PC-9 (cell line): ENCODE measurements at regions of chr4 and their contacts with region 1.

Region 1: GRCh38 chr4:3074078-3074795 is at the starts of genes HTT and HTT-AS:
- DNase-seq: peak; percentile 80 to 94
- H3K4me3 ChIP-seq: peak within 1 kb of the TSS; percentile 87
- H3K27ac ChIP-seq: peak within 1 kb of the TSS; percentile 63
- H3K4me1 ChIP-seq: peaks cover 9% of the 10 kb centered on the region
- H3K27me3 ChIP-seq: no peaks in the 10 kb centered on the region
- CTCF ChIP-seq: no peak
- total RNA-seq, gene HTT: 69.0 and 81.7 TPM in 2 replicates
- total RNA-seq, gene HTT-AS: not detected in 2 replicates

Region 2: DNA sequence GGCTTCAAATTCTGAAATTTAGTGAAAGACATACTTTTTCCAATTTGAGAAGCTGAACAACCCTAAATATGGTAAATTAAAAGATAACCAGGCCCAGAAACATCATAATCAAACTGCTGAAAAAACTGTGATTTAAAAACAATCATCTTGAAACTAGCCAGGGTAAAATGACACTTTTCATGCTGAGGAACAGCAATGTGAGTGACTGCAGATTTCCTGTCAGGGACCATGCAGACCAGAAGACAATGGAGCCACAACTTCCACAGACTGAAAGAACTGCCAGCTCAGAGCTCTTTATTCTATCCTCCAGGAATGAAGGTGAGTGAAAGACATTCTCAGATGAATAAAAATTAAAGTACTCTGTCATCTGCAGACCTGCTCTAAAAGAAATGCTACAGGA is 941.8 kb before region 1 on chr4:
- CTCF ChIA-PET with region 1: no interaction called
- POLR2A ChIA-PET with region 1: no interaction called
- intact Hi-C with region 1: no loop called
- DNase-seq: no peak
- H3K4me3 ChIP-seq: no peak overlapping the region
- H3K27ac ChIP-seq: no peak overlapping the region
- H3K4me1 ChIP-seq: peaks cover 12% of the 10 kb centered on the region
- H3K27me3 ChIP-seq: 0 out of 2 replicates have a peak, but pooled peaks cover 2% of the 10 kb centered on the region
- CTCF ChIP-seq: no peak

Region 3: GRCh38 chr4:2767046-2767704 is 307.1 kb before region 1 on chr4:
- CTCF ChIA-PET with region 1: no interaction called
- POLR2A ChIA-PET with region 1: interaction called, 16 read pairs
- intact Hi-C with region 1: no loop called
- DNase-seq: no peak
- H3K4me3 ChIP-seq: no peak overlapping the region
- H3K27ac ChIP-seq: no peak overlapping the region
- H3K4me1 ChIP-seq: no peaks in the 10 kb centered on the region
- H3K27me3 ChIP-seq: no peaks in the 10 kb centered on the region
- CTCF ChIP-seq: no peak

Region 4: DNA sequence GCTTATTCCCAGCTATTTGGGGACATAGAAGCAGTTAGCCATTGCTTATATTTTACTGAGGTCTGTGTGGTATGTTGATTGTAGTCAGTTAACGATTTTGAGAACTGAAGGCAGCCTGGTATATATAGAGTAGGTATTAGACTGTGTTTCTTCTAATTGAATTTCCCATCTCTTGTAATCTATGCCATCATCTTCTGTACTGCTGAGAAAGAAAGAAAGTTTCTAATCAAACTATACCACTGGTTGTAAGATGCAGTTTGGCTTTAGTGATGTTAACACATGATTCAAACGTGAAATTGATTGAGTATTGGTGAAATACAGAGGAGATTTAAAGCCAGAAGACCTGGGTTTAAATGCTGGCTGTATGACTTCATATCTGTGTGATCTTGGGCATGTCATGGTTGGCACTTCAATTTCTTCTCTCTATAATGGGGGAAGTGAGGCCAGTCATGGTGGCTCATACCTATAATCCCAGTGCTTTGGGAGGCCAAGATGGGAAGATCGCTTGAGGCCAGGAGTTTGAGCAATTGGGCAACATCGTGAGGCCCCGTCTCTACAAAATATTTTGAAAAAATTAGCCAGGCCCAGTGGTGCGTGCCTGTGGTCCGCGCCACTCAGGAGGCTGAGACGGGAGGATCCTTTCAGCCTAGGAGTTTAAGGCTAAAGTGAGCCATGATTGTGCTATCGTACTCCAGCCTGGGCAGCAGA is 11.9 kb after region 1 on chr4:
- CTCF ChIA-PET with region 1: no interaction called
- POLR2A ChIA-PET with region 1: no interaction called
- intact Hi-C with region 1: loop called (anchors 1 kb)
- DNase-seq: no peak
- H3K4me3 ChIP-seq: no peak overlapping the region
- H3K27ac ChIP-seq: no peak overlapping the region
- H3K4me1 ChIP-seq: 0 out of 2 replicates have a peak, but pooled peaks cover 9% of the 10 kb centered on the region
- H3K27me3 ChIP-seq: no peaks in the 10 kb centered on the region
- CTCF ChIP-seq: no peak